Tibial artery (tissue), 4 donors: ENCODE measurements at regions of chr4 and their contacts with region 1.

Region 1: GRCh38 chr4:76949276-76950051 is at the start of gene SEPTIN11:
- DNase-seq: peak; percentile 95 to 96
- H3K4me3 ChIP-seq: peak within 1 kb of the TSS; percentile 79 to 81
- H3K27ac ChIP-seq: peak within 1 kb of the TSS; percentile 94 to 97
- H3K4me1 ChIP-seq: peaks cover 0 to 38% (median 16%) of the 10 kb centered on the region in 4 donors
- H3K27me3 ChIP-seq: no peaks in the 10 kb centered on the region
- CTCF ChIP-seq: no peak

Region 2: DNA sequence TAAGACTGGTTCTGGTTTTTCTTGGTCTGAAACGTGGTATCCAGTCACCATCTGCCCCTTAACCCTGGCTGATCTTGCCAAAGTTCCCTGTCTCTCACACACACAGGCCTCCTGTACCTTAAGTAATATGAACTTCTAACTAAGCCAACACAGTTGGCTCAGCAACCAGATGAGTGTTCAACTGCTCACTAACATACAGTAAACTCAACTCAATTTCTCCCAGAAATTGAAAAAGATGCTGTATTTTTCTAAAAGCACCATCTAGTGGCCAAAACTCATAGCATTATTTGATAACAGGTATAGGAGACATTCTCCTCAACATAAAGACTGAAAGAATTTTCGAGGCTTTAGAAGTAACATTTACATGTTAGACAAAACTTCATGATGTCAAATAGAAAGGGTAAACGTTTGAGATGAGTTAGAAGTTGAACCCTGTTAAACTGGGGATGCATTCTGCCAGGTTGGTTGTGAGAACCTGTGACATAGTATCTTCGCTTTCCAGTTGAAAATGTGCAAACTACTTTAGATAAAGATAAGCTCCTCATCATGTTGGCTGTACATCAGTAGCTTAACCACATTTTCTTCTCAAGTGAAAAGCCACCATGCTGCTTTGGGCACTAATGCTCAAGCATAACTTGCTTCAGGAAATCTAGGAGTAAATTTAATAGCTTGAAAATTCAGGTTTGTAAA is 95.1 kb after region 1 on chr4:
- intact Hi-C with region 1: loop called (anchors 10 kb)
- DNase-seq: no peak
- H3K4me3 ChIP-seq: no peak overlapping the region
- H3K27ac ChIP-seq: peak overlapping the region; percentile 24 to 31
- H3K4me1 ChIP-seq: peaks cover 0 to 23% (median 12%) of the 10 kb centered on the region in 4 donors
- H3K27me3 ChIP-seq: no peaks in the 10 kb centered on the region
- CTCF ChIP-seq: peak; percentile 45 to 54